ENCODE measurements at regions of chr5 and their contacts with region 1.

Region 1: DNA sequence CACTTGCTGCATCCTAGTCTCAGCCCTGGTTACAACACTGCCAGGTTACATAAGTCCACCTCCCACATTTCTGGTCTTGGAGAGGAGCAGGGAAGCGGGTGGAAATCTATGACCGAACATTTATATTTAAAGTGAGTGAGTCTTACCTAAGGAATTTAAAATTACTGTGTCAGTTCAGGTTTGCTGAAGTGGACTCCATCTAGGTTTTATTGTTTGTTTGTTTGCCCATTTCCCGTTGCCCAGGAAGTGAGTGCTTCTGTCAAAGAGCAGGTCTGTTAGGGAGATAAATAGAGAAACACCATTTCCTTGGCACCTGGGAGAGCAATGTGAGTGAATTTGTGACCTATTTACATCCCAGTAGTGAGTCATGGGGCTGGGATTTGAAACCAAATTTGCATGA is 179.5 kb downstream of the KIF4B start:
- DNase-seq: no peak
- ATAC-seq: peak; percentile 85

Region 2: DNA sequence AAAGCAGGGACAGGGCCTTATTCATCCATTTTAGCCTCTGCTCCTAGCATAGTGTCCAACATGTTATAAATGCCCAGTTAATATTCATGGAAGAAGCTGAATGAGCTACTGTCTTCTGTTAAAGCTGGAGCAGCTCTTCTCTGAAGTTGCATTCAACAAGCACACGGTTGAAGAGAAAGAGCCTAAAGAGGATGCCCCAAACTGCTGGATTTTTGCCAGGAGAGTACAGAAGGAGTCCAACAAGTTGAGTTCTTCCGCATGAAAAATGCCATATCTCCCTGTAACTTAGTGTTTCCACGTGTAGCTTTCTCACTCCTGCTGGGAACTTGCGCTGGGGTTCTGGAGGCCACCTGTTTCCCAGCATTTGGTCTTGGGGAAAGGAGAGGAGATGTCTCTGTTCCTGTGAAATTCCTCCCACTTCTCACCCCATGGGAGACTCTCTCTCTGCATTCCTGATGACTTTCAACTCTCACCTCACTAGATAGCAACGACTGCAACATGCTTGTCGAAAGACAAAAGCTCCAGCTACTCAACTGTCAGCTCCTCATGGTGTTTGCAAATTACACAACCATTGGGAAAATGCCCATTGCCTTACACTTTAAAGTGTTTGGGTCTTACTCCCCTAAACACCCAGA is 56.7 kb before region 1 on chr5:
- intact Hi-C with region 1: loop called (anchors 2 kb)
- DNase-seq: no peak
- ATAC-seq: peak; percentile 75